ENCODE measurements at regions of chr7 and their contacts with region 1.

Region 1: GRCh38 chr7:2863461-2864066 is 19.5 kb upstream of the GNA12 start:
- DNase-seq: peak; percentile 97
- ATAC-seq: peak; percentile 95
- H3K4me3 ChIP-seq: no peak overlapping the region
- H3K27ac ChIP-seq: peak overlapping the region; percentile 97
- H3K4me1 ChIP-seq: peaks cover 13% of the 10 kb centered on the region
- H3K27me3 ChIP-seq: no peaks in the 10 kb centered on the region
- CTCF ChIP-seq: no peak
- POLR2A ChIP-seq: peak; percentile 87
- RAD21 ChIP-seq: peak; percentile 11; the same call in 1 of the 2 replicates

Region 2: GRCh38 chr7:3154912-3155494 is 291.4 kb after region 1 on chr7:
- CTCF ChIA-PET with region 1: no interaction called
- POLR2A ChIA-PET with region 1: no interaction called
- dilution Hi-C with region 1: no loop called
- in situ Hi-C with region 1: no loop called
- intact Hi-C with region 1: loop called (anchors 1 kb)
- DNase-seq: peak; percentile 48
- ATAC-seq: peak; percentile 88
- H3K4me3 ChIP-seq: no peak overlapping the region
- H3K27ac ChIP-seq: no peak overlapping the region
- H3K4me1 ChIP-seq: no peaks in the 10 kb centered on the region
- H3K27me3 ChIP-seq: peaks cover 3% of the 10 kb centered on the region; the same call in 1 of the 2 replicates
- CTCF ChIP-seq: peak; percentile 62
- POLR2A ChIP-seq: no peak
- RAD21 ChIP-seq: peak; percentile 74

Region 3: DNA sequence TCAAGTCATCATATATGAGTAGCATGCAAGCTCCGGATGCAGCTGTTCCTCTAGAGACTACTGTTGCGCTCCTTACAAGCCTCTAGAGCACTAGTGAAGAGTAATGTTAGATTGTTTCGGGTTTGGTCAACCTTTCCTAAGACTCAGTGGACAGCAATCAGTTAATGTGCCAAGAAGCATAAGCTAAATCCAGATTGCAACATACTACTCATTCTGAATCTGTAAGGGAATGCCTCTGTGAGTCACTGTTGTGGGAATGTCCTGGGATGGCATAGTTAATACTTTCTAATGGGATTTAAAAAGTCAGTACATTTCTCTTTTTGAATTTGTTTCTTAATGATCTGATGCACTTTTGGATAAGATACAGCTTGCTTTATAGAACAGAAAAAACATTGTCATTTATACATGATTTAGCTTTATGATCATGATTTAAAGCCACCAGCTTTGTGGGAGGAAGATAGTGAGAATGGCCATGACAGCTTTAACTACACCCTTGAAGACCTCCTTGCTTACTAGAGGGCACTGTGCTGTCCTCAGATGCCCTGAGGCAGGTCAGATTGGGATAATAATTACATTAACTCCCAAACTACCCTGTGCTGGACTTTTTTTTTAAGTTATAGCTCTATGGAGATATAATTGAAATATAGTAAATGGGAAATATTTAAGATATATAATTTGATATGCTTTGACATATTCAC is 575.9 kb after region 1 on chr7:
- CTCF ChIA-PET with region 1: no interaction called
- POLR2A ChIA-PET with region 1: no interaction called
- dilution Hi-C with region 1: no loop called
- in situ Hi-C with region 1: no loop called
- intact Hi-C with region 1: loop called (anchors 10 kb)
- DNase-seq: peak; percentile 99
- ATAC-seq: peak; percentile 87
- H3K4me3 ChIP-seq: no peak overlapping the region
- H3K27ac ChIP-seq: peak overlapping the region; percentile 61; the same call in 1 of the 2 replicates
- H3K4me1 ChIP-seq: peaks cover 7% of the 10 kb centered on the region
- H3K27me3 ChIP-seq: no peaks in the 10 kb centered on the region
- CTCF ChIP-seq: no peak
- POLR2A ChIP-seq: no peak
- RAD21 ChIP-seq: no peak

Region 4: DNA sequence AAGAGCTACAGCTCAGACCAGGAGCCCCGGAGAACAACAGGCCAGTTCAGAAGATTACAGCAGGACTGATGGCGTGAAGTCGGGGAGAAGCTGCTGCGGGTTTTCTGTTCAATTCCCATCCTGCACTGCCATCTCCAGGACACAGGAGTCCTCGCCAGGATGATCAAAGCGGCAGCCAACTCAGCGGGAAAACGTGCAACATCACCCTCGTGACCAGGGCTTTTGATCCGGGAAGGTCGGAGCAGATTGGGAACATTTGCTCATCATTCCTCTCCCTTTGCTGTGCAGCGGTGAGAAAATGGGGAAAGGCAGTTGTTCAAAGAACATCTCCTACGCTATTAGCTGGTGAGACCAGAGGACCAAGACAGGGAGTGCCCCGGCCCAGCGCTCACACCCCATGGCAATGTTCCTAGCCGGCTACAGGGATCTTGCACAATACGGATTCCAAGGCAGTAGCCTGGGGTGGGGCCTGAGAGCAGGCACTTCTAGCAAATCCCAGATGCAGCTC is 1768.2 kb after region 1 on chr7:
- CTCF ChIA-PET with region 1: no interaction called
- POLR2A ChIA-PET with region 1: no interaction called
- dilution Hi-C with region 1: no loop called
- in situ Hi-C with region 1: loop called (anchors 25 kb)
- intact Hi-C with region 1: loop called (anchors 5 kb)
- DNase-seq: peak; percentile 91
- ATAC-seq: peak; percentile 95
- H3K4me3 ChIP-seq: peak overlapping the region; percentile 42
- H3K27ac ChIP-seq: peak overlapping the region; percentile 85
- H3K4me1 ChIP-seq: peaks cover 4% of the 10 kb centered on the region; the same call in 1 of the 2 replicates
- H3K27me3 ChIP-seq: peaks cover 5% of the 10 kb centered on the region; the same call in 1 of the 2 replicates
- CTCF ChIP-seq: peak; percentile 81
- POLR2A ChIP-seq: no peak
- RAD21 ChIP-seq: peak; percentile 86

Region 5: GRCh38 chr7:4753711-4754432 is 1890.3 kb after region 1 on chr7:
- CTCF ChIA-PET with region 1: no interaction called
- POLR2A ChIA-PET with region 1: no interaction called
- dilution Hi-C with region 1: no loop called
- in situ Hi-C with region 1: loop called (anchors 25 kb)
- intact Hi-C with region 1: no loop called
- DNase-seq: peak; percentile 34
- ATAC-seq: peak; percentile 82
- H3K4me3 ChIP-seq: no peak overlapping the region
- H3K27ac ChIP-seq: no peak overlapping the region
- H3K4me1 ChIP-seq: no peaks in the 10 kb centered on the region
- H3K27me3 ChIP-seq: no peaks in the 10 kb centered on the region
- CTCF ChIP-seq: peak; percentile 71
- POLR2A ChIP-seq: 0 out of 2 replicates have a peak, but pooled peaks have one; percentile 30
- RAD21 ChIP-seq: peak; percentile 81